PC-3 (cell line): ENCODE measurements at regions of chr2 and their contacts with region 1.

Region 1: DNA sequence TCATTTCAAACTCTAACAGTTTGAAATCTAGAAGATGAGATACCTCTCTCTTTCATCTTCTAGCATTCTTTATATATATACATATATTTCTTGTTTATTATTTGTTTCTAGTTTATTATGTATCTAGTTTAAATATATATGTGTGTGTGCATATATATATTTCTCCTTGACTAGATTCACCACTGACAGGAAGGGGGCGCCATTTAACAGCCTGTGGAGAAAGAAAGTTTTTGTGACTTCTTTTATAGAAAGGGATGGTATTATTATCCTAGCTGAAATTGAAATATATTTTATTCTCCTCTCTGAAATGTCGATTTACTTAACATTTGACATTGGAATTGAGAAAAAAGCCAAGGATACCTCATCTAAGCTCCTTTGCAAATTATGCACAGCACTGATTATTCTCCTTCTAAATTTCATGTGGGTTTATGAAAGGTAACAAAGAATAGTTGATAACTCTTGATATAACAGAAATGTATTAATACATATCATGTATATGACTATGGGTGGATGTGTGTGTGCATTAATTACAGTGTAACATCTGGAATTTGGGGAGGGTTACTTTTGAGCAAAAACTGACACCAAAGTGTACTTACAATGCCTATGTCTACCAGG is 160.7 kb upstream of the NT5C1B start:
- DNase-seq: peak; percentile 74
- ATAC-seq: no peak
- H3K4me3 ChIP-seq: no peak overlapping the region
- H3K27ac ChIP-seq: no peak overlapping the region
- H3K4me1 ChIP-seq: peaks cover 35% of the 10 kb centered on the region
- H3K27me3 ChIP-seq: no peaks in the 10 kb centered on the region
- CTCF ChIP-seq: peak; percentile 83

Region 2: GRCh38 chr2:18387441-18388206 is 362.4 kb before region 1 on chr2:
- CTCF ChIA-PET with region 1: no interaction called
- POLR2A ChIA-PET with region 1: no interaction called
- intact Hi-C with region 1: loop called (anchors 5 kb)
- DNase-seq: peak; percentile 88
- ATAC-seq: peak; percentile 94
- H3K4me3 ChIP-seq: no peak overlapping the region
- H3K27ac ChIP-seq: no peak overlapping the region
- H3K4me1 ChIP-seq: no peaks in the 10 kb centered on the region
- H3K27me3 ChIP-seq: no peaks in the 10 kb centered on the region
- CTCF ChIP-seq: peak; percentile 95

Region 3: DNA sequence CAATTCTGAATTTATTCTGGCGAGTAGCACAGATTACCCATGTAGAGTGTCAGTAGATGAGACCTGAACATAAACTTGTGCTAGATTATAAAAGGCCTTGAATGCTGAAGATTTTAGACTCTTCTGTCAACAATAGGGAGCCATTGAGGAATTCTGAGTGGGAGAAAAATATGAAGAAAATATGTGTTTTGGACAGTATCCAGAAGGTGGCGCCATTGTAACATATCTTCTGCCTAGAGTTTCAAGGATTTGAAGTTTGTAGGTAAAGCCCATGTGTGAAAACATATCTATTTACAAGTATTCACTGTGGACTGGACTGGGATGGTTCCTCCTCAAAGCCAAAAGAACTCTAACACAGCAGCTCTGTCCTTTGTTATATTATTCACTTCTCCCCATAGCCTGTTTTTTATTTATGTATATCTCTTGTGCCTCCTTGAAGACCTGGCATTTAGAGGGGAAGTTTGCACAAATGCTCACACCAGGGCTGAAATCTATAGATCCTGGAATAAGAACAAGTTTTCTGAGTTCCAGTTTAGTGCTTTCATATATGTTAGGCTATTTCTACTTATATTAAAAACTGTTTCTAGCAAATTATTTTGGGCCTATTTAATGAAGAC is 314.5 kb before region 1 on chr2:
- CTCF ChIA-PET with region 1: no interaction called
- POLR2A ChIA-PET with region 1: no interaction called
- intact Hi-C with region 1: loop called (anchors 2 kb)
- DNase-seq: peak; percentile 82
- ATAC-seq: peak; percentile 61
- H3K4me3 ChIP-seq: no peak overlapping the region
- H3K27ac ChIP-seq: no peak overlapping the region
- H3K4me1 ChIP-seq: peaks cover 17% of the 10 kb centered on the region
- H3K27me3 ChIP-seq: no peaks in the 10 kb centered on the region
- CTCF ChIP-seq: peak; percentile 86

Region 4: GRCh38 chr2:18883616-18884456 is 133.8 kb after region 1 on chr2:
- CTCF ChIA-PET with region 1: no interaction called
- POLR2A ChIA-PET with region 1: no interaction called
- intact Hi-C with region 1: loop called (anchors 5 kb)
- DNase-seq: peak; percentile 69
- ATAC-seq: peak; percentile 60
- H3K4me3 ChIP-seq: no peak overlapping the region
- H3K27ac ChIP-seq: no peak overlapping the region
- H3K4me1 ChIP-seq: 0 out of 2 replicates have a peak, but pooled peaks cover 9% of the 10 kb centered on the region
- H3K27me3 ChIP-seq: no peaks in the 10 kb centered on the region
- CTCF ChIP-seq: peak; percentile 85

Region 5: DNA sequence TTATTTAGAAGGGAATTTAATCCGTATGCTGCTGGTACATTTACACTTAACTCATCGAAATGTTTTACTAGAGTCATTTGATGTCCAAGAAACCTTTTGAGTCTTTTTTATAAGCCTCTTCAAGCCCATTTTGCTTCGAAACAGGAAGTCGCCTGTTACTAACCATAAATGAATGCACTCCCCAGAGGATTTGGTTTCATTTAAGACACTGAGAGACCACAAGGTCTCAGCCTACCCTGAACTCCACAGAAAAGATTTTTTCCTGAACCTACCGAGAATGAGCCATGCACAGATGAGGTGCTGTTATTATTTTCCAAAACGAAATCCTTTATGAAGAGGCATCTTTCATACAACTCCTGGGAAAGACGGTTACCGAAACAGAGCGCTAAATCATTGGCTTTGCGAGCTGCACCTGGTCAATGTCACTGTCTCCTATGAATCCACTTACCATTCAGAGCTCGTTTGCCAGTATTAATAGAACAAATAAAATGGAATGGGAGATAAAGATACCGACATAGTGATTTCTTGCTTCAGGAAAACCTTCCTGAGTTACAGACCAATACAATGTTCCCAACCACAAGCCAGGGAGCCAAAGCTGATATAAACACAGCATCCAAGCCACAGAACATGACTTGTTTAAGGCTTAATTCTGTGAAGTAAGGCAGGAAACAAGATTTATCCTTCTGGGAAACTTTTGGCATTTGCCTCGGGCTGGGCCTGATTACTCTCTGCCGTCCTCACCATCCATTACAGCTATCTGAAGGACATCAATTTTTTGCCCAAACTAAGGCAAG is 226.3 kb after region 1 on chr2:
- CTCF ChIA-PET with region 1: no interaction called
- POLR2A ChIA-PET with region 1: no interaction called
- intact Hi-C with region 1: loop called (anchors 5 kb)
- DNase-seq: peak; percentile 89
- ATAC-seq: peak; percentile 81
- H3K4me3 ChIP-seq: peak overlapping the region; percentile 14
- H3K27ac ChIP-seq: peak overlapping the region; percentile 64
- H3K4me1 ChIP-seq: peaks cover 30% of the 10 kb centered on the region
- H3K27me3 ChIP-seq: no peaks in the 10 kb centered on the region
- CTCF ChIP-seq: no peak